Psoas muscle (tissue), 8 donors: ENCODE measurements at regions of chr1 and their contacts with region 1.

Region 1: DNA sequence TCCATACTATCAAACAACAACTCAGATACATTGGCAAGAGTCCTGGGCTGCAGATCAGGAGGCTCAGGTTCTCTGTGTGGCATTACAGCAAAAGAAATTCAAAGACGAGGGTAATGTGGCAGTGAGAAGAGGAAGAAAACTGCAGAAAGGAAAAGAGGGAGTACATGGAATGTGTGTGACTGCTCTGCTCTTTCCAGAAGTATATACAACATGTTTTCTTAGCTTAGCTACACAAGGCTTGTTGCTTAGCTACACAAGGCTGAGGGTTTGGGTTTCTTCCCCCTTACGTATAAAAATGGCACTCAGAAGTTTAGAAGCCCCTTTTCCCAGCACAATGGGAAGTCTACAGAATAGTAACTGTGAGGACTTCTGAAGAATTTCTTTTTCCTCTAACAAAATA is 86.0 kb downstream of the PRRX1 start:
- DNase-seq: no peak
- ATAC-seq: peak in 1 of 4 donors; percentile 14
- H3K4me3 ChIP-seq: no peak overlapping the region
- H3K27ac ChIP-seq: no peak overlapping the region
- H3K4me1 ChIP-seq: peaks cover 8% of the 10 kb centered on the region
- H3K27me3 ChIP-seq: no peaks in the 10 kb centered on the region
- CTCF ChIP-seq: no peak

Region 2: DNA sequence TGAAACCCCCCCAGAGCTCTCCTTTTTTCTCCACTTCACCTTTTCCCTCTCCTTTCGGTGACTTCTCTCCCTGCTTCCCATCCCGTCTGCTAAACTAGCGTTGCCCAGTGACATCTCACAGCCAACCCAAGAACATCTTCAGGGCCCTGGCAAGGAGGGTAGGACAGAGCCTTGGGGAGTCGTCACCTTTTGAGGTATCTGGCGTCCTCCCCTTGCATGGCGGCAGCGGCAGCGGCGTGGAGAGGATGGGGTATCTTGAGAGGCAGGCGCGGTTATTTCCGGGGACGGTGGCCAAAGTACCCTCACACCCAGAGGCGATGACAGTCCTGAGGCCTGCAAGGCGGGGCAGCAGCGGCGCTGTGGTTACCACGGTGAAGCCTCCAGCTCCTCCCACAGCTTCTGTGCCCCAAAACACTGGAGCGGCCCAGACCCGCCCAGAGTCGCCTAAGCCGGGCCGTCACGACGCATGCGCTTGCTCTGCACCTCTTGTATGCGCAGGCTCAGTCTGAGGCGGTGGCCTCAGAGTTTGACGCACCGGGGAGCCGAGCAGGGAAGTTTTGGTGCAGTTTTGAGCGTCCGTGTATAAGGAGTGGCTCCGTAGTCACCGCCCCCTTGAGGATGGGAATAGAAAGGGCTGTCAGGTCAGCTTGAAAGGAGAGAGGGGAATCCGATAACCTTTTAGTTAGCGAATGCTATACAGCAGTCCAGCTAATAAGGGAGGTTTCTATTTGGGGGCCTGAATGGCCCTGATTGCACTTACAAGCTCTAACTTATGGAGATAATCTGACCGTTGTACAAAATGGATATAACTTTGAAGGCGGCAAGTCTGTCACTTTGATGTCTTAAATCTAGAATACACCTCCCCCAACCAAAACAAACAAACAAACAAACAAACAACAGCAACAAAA is 675.5 kb before region 1 on chr1 and contains the start of gene KIFAP3:
- intact Hi-C with region 1: loop called in 1 of 2 experiments (anchors 10 kb)
- DNase-seq: peak; percentile 98 to 99
- ATAC-seq: peak; percentile 99 to 100 (median 100)
- H3K4me3 ChIP-seq: peak within 1 kb of the TSS; percentile 80
- H3K27ac ChIP-seq: peak within 1 kb of the TSS; percentile 77
- H3K4me1 ChIP-seq: peaks cover 6% of the 10 kb centered on the region
- H3K27me3 ChIP-seq: peaks cover 0 to 2% (median 0%) of the 10 kb centered on the region in 3 donors
- CTCF ChIP-seq: peak; percentile 56
- total RNA-seq, gene KIFAP3: 17.0 to 25.7 (median 22.2) TPM

Region 3: GRCh38 chr1:170776777-170777176 is 26.8 kb after region 1 on chr1:
- intact Hi-C with region 1: no loop called
- DNase-seq: no peak
- ATAC-seq: peak in 3 of 4 donors; percentile 34 to 69 (median 51)
- H3K4me3 ChIP-seq: no peak overlapping the region
- H3K27ac ChIP-seq: no peak overlapping the region
- H3K4me1 ChIP-seq: no peaks in the 10 kb centered on the region
- H3K27me3 ChIP-seq: no peaks in the 10 kb centered on the region
- CTCF ChIP-seq: no peak